Naive thymus-derived CD4-positive, alpha-beta T cell (primary cell): ENCODE measurements at regions of chr17 and their contacts with region 1.

Region 1: GRCh38 chr17:8118769-8119580 is 661 bp upstream of the ALOXE3 start:
- DNase-seq: peak; percentile 78 to 92 (median 90)
- ATAC-seq: peak; percentile 76
- H3K4me3 ChIP-seq: peak overlapping the region; percentile 95
- H3K4me3 Mint-ChIP-seq: peak overlapping the region; percentile 88 to 99 (median 94)
- H3K27ac ChIP-seq: peak overlapping the region; percentile 64
- H3K27ac Mint-ChIP-seq: peak overlapping the region; percentile 94 to 100 (median 99)
- H3K4me1 ChIP-seq: peaks cover 44 to 46% of the 10 kb centered on the region in 2 donors
- H3K4me1 Mint-ChIP-seq: peaks cover 27 to 61% (median 53%) of the 10 kb centered on the region in 7 donors
- H3K27me3 ChIP-seq: peaks cover 0 to 12% of the 10 kb centered on the region in 2 donors
- H3K27me3 Mint-ChIP-seq: peaks cover 9 to 77% (median 45%) of the 10 kb centered on the region in 5 donors

Region 2: DNA sequence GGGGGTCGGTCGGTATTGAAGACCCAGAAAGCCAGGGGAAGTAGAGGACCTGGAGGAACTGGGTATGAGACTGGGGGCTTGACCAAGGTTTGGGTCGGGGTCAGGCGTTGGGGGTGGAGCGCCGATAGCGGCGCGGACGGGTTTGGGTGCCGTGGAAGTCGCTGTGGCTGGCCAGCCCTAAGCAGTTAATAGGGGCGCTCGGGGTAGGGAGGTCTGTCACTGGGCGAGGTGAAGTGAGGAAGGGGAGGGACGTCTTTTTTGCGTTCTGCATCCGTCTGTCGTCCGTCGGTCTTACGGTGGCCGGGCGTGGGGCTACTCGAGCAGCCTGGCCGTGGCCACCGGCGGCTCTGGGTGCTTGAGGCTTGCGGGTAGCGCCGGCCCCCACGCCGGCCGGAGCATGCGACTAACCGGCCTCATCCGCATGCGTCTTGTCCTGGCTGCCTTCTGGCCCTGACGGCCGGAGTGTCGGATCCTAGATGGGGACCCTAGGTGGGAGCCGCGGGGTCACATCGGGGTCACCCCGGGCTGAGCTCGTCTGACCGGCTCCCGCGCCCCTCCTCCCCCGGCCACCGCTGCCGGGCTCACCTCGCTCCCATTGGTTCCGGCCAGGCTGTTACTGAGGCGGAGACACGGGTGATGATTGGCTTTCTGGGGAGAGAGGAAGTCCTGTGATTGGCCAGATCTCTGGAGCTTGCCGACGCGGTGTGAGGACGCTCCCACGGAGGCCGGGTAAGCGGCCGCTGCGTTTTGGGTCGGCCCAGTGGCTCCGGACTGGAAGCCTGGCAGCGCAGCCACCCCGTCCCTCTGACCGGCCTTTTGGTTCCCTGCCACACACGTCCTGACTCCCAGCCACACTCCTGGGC is 274.5 kb before region 1 on chr17:
- CTCF ChIA-PET with region 1: no interaction called
- POLR2A ChIA-PET with region 1: no interaction called
- intact Hi-C with region 1: loop called in 1 of 2 experiments (anchors 2 kb)
- DNase-seq: peak; percentile 74 to 87 (median 79)
- ATAC-seq: peak; percentile 42
- H3K4me3 ChIP-seq: peak overlapping the region; percentile 84
- H3K4me3 Mint-ChIP-seq: peak overlapping the region; percentile 85 to 99 (median 94)
- H3K27ac ChIP-seq: peak overlapping the region; percentile 100
- H3K27ac Mint-ChIP-seq: peak overlapping the region; percentile 90 to 100 (median 99)
- H3K4me1 ChIP-seq: peaks cover 11 to 26% of the 10 kb centered on the region in 2 donors
- H3K4me1 Mint-ChIP-seq: peaks cover 19 to 41% (median 29%) of the 10 kb centered on the region in 7 donors
- H3K27me3 ChIP-seq: no peaks in the 10 kb centered on the region
- H3K27me3 Mint-ChIP-seq: peaks cover 0 to 2% (median 0%) of the 10 kb centered on the region in 5 donors

Region 3: DNA sequence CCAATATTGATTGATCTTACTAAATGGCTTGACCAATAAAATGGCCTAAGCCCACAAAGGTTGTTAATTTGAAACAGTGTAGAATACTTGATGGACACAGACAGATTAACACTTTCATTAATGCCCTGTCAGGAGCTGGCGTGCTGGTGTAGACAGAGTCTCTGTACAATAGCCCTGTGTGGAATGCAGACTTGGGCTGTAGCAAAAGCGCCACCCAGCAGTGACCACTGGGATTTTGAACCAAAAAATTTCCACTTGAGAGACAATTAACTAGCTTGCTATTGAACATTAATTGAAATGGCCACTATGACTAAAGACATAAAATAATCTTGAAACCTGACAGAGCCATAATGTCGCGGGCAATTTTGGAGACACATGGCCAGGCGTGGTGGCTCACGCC is 136.3 kb before region 1 on chr17:
- CTCF ChIA-PET with region 1: no interaction called
- POLR2A ChIA-PET with region 1: no interaction called
- intact Hi-C with region 1: no loop called
- DNase-seq: no peak
- ATAC-seq: no peak
- H3K4me3 ChIP-seq: no peak overlapping the region
- H3K4me3 Mint-ChIP-seq: no peak overlapping the region
- H3K27ac ChIP-seq: no peak overlapping the region
- H3K27ac Mint-ChIP-seq: no peak overlapping the region
- H3K4me1 ChIP-seq: no peaks in the 10 kb centered on the region
- H3K4me1 Mint-ChIP-seq: peaks cover 0 to 3% (median 0%) of the 10 kb centered on the region in 7 donors
- H3K27me3 ChIP-seq: no peaks in the 10 kb centered on the region
- H3K27me3 Mint-ChIP-seq: peaks cover 0 to 24% (median 0%) of the 10 kb centered on the region in 5 donors

Region 4: GRCh38 chr17:8057691-8058114 is 61.3 kb before region 1 on chr17:
- CTCF ChIA-PET with region 1: interaction called, 66 read pairs
- POLR2A ChIA-PET with region 1: interaction called, 3 read pairs
- intact Hi-C with region 1: loop called in 1 of 2 experiments (anchors 2 kb)
- DNase-seq: peak in 7 of 9 donors; percentile 49 to 73 (median 64)
- ATAC-seq: peak; percentile 90
- H3K4me3 ChIP-seq: no peak overlapping the region
- H3K4me3 Mint-ChIP-seq: no peak overlapping the region
- H3K27ac ChIP-seq: no peak overlapping the region
- H3K27ac Mint-ChIP-seq: no peak overlapping the region
- H3K4me1 ChIP-seq: no peaks in the 10 kb centered on the region
- H3K4me1 Mint-ChIP-seq: peaks cover 0 to 20% (median 6%) of the 10 kb centered on the region in 7 donors
- H3K27me3 ChIP-seq: peaks cover 0 to 4% of the 10 kb centered on the region in 2 donors
- H3K27me3 Mint-ChIP-seq: peaks cover 34 to 62% (median 44%) of the 10 kb centered on the region in 5 donors

Region 5: DNA sequence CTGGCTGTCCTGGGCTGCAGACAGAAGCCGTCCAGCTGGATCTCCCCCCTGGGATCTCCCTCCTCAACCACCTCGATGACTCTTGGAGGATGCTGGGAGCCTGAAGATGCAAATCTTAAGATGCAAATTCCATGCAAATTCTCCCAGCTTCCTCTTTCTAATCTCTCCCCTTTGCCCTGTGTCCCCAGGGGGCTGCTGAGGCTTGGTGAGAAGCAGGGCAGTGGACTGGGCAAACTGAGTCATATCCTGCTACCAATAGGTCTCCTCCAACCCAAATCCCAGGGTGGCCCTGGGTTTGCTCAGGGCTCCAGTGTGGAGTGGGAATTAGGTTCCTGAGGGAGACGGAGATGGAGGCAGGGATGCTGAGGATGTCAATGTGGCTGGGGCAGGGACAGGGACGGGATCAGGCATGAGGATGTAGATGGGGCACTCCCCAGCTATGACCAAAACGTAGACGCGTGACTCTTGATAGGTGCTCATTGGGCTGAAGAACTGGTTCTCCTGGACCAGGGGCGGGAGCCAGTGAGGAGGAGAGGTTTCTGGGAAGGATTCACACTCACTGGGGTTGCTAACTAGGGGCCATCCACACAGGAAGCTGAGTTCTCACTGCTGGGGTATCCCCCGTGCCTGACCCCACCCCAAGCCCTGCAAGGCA is 27.8 kb before region 1 on chr17:
- CTCF ChIA-PET with region 1: interaction called, 248 read pairs
- POLR2A ChIA-PET with region 1: interaction called, 12 read pairs
- intact Hi-C with region 1: loop called (anchors 1 kb)
- DNase-seq: no peak
- ATAC-seq: no peak
- H3K4me3 ChIP-seq: no peak overlapping the region
- H3K4me3 Mint-ChIP-seq: no peak overlapping the region
- H3K27ac ChIP-seq: no peak overlapping the region
- H3K27ac Mint-ChIP-seq: no peak overlapping the region
- H3K4me1 ChIP-seq: peaks cover 5 to 13% of the 10 kb centered on the region in 2 donors
- H3K4me1 Mint-ChIP-seq: peaks cover 6 to 17% (median 15%) of the 10 kb centered on the region in 7 donors
- H3K27me3 ChIP-seq: peaks cover 0 to 5% of the 10 kb centered on the region in 2 donors
- H3K27me3 Mint-ChIP-seq: peaks cover 4 to 49% (median 21%) of the 10 kb centered on the region in 5 donors

Region 6: DNA sequence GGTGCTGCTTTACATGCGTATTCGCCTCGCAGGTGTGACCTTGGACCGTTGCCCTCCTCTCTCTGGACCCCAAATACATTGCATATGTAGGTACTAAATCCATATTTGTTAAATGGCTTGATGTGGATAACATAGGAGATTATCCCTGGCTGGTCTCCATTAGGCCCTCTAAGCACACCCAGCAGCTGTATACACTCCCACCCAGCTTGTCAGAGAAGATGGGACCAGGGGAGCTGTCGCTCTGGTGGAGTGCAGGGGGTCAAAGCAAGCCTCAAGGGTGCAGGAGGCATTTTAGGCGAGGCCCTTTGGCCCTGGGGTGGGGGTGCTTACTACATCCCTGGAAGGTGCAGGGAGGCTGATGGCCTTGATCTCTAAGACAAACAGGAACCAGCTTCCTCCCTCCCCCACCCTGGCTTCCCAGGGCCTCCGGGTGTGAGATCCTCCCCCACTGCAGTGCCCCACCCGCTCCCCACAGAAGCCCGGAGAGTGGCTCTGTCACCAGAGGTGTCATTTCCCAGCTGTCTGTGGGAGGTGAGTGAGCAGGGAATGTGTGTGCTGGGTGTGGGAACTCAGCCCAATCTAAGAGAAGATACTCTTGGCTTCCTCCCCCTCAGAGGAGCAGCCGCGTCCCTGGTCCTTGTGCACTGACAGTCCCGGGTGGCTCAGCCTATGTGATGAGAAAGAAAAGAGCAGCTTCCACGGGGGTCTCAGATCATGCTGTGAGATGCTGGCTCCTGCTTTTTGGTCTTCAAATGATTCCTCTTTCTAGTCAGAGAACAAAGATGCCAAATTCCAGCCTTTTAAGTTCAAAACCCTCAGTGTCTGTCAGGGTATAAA is 45.2 kb after region 1 on chr17:
- CTCF ChIA-PET with region 1: interaction called, 24 read pairs
- POLR2A ChIA-PET with region 1: interaction called, 28 read pairs
- intact Hi-C with region 1: no loop called
- DNase-seq: peak; percentile 38 to 80 (median 71)
- ATAC-seq: peak; percentile 68
- H3K4me3 ChIP-seq: peak overlapping the region; percentile 72
- H3K4me3 Mint-ChIP-seq: peak overlapping the region; percentile 78 to 94 (median 85)
- H3K27ac ChIP-seq: peak overlapping the region; percentile 100
- H3K27ac Mint-ChIP-seq: peak overlapping the region in 8 of 9 donors; percentile 94 to 99 (median 98)
- H3K4me1 ChIP-seq: peaks cover 35 to 46% of the 10 kb centered on the region in 2 donors
- H3K4me1 Mint-ChIP-seq: peaks cover 45 to 63% (median 55%) of the 10 kb centered on the region in 7 donors
- H3K27me3 ChIP-seq: peaks cover 0 to 3% of the 10 kb centered on the region in 2 donors
- H3K27me3 Mint-ChIP-seq: no peaks in the 10 kb centered on the region

Region 7: GRCh38 chr17:8294814-8295316 is 175.9 kb after region 1 on chr17:
- CTCF ChIA-PET with region 1: interaction called, 12 read pairs
- POLR2A ChIA-PET with region 1: interaction called, 9 read pairs
- intact Hi-C with region 1: loop called (anchors 1 to 2 kb)
- DNase-seq: no peak
- ATAC-seq: no peak
- H3K4me3 ChIP-seq: peak overlapping the region; percentile 96
- H3K4me3 Mint-ChIP-seq: peak overlapping the region; percentile 87 to 97 (median 90)
- H3K27ac ChIP-seq: peak overlapping the region; percentile 86
- H3K27ac Mint-ChIP-seq: peak overlapping the region; percentile 81 to 98 (median 93)
- H3K4me1 ChIP-seq: peaks cover 4 to 13% of the 10 kb centered on the region in 2 donors
- H3K4me1 Mint-ChIP-seq: peaks cover 23 to 45% (median 38%) of the 10 kb centered on the region in 7 donors
- H3K27me3 ChIP-seq: no peaks in the 10 kb centered on the region
- H3K27me3 Mint-ChIP-seq: no peaks in the 10 kb centered on the region